ENCODE measurements at regions of chr1 and their contacts with region 1.

Region 1: GRCh38 chr1:19715334-19716203 is 50.9 kb downstream of the HTR6 start:
- DNase-seq: peak; percentile 71 to 83 (median 75)
- H3K4me3 ChIP-seq: no peak overlapping the region
- H3K4me3 Mint-ChIP-seq: peak overlapping the region in 1 of 8 donors; percentile 29
- H3K27ac ChIP-seq: no peak overlapping the region
- H3K27ac Mint-ChIP-seq: peak overlapping the region in 2 of 7 donors; percentile 6 to 61
- H3K4me1 ChIP-seq: peaks cover 11% of the 10 kb centered on the region
- H3K4me1 Mint-ChIP-seq: peaks cover 10 to 15% (median 14%) of the 10 kb centered on the region in 4 donors
- H3K27me3 ChIP-seq: no peaks in the 10 kb centered on the region
- H3K27me3 Mint-ChIP-seq: no peaks in the 10 kb centered on the region

Region 2: GRCh38 chr1:19676438-19676922 is 39.1 kb before region 1 on chr1:
- CTCF ChIA-PET with region 1: interaction called, 10 read pairs
- POLR2A ChIA-PET with region 1: no interaction called
- intact Hi-C with region 1: no loop called
- DNase-seq: no peak
- H3K4me3 ChIP-seq: no peak overlapping the region
- H3K4me3 Mint-ChIP-seq: no peak overlapping the region
- H3K27ac ChIP-seq: no peak overlapping the region
- H3K27ac Mint-ChIP-seq: no peak overlapping the region
- H3K4me1 ChIP-seq: no peaks in the 10 kb centered on the region
- H3K4me1 Mint-ChIP-seq: peaks cover 0 to 5% (median 3%) of the 10 kb centered on the region in 4 donors
- H3K27me3 ChIP-seq: no peaks in the 10 kb centered on the region
- H3K27me3 Mint-ChIP-seq: peaks cover 1 to 5% of the 10 kb centered on the region in 2 donors

Region 3: DNA sequence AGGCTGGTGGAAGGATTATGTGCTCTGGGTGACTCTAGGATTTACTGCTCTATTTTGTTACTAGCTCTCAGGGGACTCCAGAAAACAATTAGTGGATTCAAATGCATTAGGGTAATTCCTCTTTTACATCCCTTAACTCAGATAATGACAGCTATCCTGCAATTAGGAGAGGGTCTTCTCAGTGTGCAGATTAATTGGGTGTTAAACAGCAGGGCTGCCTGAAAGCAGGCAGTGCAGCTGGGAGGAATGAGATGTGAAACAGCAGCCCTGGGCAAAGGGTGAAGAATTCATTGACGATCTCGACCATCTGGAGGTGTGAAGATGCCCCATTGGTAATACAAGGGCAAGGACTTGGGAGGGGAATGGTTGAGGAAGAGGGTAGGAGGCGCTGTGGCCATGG is 15.2 kb after region 1 on chr1:
- CTCF ChIA-PET with region 1: interaction called, 14 read pairs
- POLR2A ChIA-PET with region 1: interaction called, 3 read pairs
- intact Hi-C with region 1: no loop called
- DNase-seq: no peak
- H3K4me3 ChIP-seq: no peak overlapping the region
- H3K4me3 Mint-ChIP-seq: no peak overlapping the region
- H3K27ac ChIP-seq: no peak overlapping the region
- H3K27ac Mint-ChIP-seq: no peak overlapping the region
- H3K4me1 ChIP-seq: no peaks in the 10 kb centered on the region
- H3K4me1 Mint-ChIP-seq: no peaks in the 10 kb centered on the region
- H3K27me3 ChIP-seq: no peaks in the 10 kb centered on the region
- H3K27me3 Mint-ChIP-seq: no peaks in the 10 kb centered on the region

Region 4: GRCh38 chr1:19772053-19772452 is 56.5 kb after region 1 on chr1:
- CTCF ChIA-PET with region 1: no interaction called
- POLR2A ChIA-PET with region 1: no interaction called
- intact Hi-C with region 1: no loop called
- DNase-seq: no peak
- H3K4me3 ChIP-seq: no peak overlapping the region
- H3K4me3 Mint-ChIP-seq: no peak overlapping the region
- H3K27ac ChIP-seq: no peak overlapping the region
- H3K27ac Mint-ChIP-seq: peak overlapping the region in 1 of 7 donors; percentile 48
- H3K4me1 ChIP-seq: no peaks in the 10 kb centered on the region
- H3K4me1 Mint-ChIP-seq: peaks cover 0 to 6% (median 0%) of the 10 kb centered on the region in 4 donors
- H3K27me3 ChIP-seq: no peaks in the 10 kb centered on the region
- H3K27me3 Mint-ChIP-seq: no peaks in the 10 kb centered on the region

Region 5: DNA sequence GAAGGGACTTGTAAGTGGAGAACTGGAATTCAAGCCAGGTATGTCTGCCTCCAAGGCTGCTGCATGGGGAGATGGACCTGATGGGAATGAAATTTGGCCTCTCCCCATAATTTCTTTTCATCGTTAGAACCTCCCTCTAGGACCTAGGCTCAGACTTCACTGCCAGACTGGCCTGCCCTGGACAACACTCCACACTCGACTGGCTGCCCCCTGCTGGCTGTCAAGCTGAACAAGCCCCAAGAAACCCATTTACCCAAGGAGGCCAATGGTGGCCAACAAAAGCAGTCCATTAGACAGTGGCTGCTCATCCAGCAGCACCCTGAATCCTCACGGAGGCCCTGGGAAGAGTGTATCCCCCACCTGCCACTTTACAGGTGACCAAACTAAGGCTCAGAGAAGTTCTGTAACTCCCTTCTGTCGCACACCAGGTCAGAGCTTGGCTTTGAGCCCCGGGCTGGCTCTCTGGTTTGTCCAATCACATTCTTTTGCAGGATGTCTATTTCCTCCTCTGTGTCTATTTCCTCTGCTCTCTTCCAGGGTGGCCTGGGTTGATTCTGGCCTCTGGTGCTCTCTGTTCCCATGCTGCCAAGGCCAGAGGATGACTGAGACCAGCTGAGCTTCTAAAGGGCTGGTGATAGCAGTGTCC is 95.8 kb after region 1 on chr1:
- CTCF ChIA-PET with region 1: interaction called, 4 read pairs
- POLR2A ChIA-PET with region 1: no interaction called
- intact Hi-C with region 1: loop called (anchors 1 kb)
- DNase-seq: peak in 4 of 5 donors; percentile 26 to 40 (median 34)
- H3K4me3 ChIP-seq: no peak overlapping the region
- H3K4me3 Mint-ChIP-seq: no peak overlapping the region
- H3K27ac ChIP-seq: no peak overlapping the region
- H3K27ac Mint-ChIP-seq: no peak overlapping the region
- H3K4me1 ChIP-seq: no peaks in the 10 kb centered on the region
- H3K4me1 Mint-ChIP-seq: no peaks in the 10 kb centered on the region
- H3K27me3 ChIP-seq: no peaks in the 10 kb centered on the region
- H3K27me3 Mint-ChIP-seq: no peaks in the 10 kb centered on the region

Measured in CD4-positive, alpha-beta memory T cell (primary cell).